Vagina (tissue), 2 donors: ENCODE measurements at regions of chr5 and their contacts with region 1.

Region 1: GRCh38 chr5:173972925-173973615 is 15.9 kb upstream of the C5orf47 start:
- DNase-seq: no peak
- H3K4me3 ChIP-seq: peak overlapping the region; percentile 33 to 50
- H3K27ac ChIP-seq: no peak overlapping the region
- H3K4me1 ChIP-seq: no peaks in the 10 kb centered on the region
- H3K27me3 ChIP-seq: no peaks in the 10 kb centered on the region
- CTCF ChIP-seq: peak; percentile 82 to 96 (median 89)
- POLR2A ChIP-seq: peak in 1 of 2 donors; percentile 8

Region 2: DNA sequence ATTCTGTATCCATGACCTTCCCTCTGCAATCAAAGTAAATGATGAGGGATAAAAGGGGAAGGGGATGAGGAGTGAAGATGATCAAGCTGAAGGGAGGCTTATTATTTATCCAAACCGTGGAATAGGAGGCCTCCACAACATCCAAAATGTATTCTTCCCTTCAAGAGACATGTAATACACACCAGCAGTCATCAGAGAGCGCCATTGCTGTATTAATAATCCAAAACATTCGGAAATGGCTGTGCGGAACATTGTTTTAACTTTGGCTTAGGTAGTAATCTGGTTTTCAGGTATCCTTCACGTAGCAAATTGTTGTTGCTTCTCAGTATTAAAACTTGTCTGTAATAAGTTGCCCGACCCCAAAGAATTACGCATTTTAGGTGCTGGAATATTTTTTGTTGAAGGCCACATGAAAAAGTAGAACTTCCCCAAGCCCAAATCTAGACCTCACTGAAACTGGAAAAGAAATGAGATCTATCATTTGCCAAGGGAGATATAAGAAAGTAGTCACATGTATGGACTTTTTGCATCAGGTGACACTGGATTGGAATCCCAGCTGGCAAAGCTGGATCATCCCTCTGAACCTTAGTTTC is 354.0 kb before region 1 on chr5:
- intact Hi-C with region 1: loop called (anchors 1 kb)
- DNase-seq: no peak
- H3K4me3 ChIP-seq: no peak overlapping the region
- H3K27ac ChIP-seq: no peak overlapping the region
- H3K4me1 ChIP-seq: peaks cover 26% of the 10 kb centered on the region
- H3K27me3 ChIP-seq: no peaks in the 10 kb centered on the region
- CTCF ChIP-seq: peak; percentile 58 to 88 (median 63)
- POLR2A ChIP-seq: no peak